ENCODE measurements at regions of chr14 and their contacts with region 1.

Region 1: DNA sequence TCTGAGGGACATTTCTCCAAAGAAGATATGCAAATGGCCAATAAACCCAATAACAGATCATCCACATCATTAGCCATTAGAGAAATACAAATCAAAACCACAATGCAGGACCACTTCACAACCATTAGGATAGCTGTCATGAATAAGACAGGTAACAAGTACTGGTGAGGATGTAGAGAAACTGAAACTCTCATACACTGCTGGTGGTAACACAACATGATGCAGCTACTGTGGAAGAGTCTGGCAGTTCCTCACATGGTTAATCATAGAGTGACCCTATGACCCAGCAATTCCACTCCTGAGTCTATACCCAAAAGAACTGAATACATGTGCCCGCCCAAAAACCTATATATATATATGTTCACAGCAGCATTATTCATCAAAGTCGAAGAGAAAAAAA is 39.0 kb downstream of the TTC9 start:
- DNase-seq: no peak
- CTCF ChIP-seq: no peak

Region 2: GRCh38 chr14:70635971-70636595 is 44.7 kb before region 1 on chr14:
- CTCF ChIA-PET with region 1: no interaction called
- POLR2A ChIA-PET with region 1: no interaction called
- DNase-seq: no peak
- CTCF ChIP-seq: no peak

Region 3: DNA sequence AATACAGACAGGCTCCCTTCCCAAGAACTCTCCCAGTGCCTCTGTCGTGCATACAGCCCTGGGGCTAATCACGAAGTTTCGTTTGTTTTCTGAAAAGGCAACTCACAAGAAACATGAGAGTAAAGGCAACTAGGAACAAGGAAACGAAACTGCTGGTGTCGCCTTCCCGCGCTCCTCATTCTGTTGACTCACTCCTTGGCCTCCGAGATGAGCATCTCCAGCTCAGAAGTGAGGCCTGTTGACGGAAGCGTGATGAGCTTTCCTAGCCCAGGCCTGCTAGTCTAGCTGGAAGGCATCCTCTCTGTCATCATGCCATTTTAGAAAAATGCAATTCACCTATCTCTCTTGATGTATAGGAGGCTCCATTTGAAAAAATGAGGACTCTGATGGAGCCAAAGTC is 11.5 kb after region 1 on chr14:
- CTCF ChIA-PET with region 1: interaction called, 15 read pairs
- POLR2A ChIA-PET with region 1: no interaction called
- DNase-seq: no peak
- CTCF ChIP-seq: no peak